MCF 10A (cell line): ENCODE measurements at regions of chr20 and their contacts with region 1.

Region 1: DNA sequence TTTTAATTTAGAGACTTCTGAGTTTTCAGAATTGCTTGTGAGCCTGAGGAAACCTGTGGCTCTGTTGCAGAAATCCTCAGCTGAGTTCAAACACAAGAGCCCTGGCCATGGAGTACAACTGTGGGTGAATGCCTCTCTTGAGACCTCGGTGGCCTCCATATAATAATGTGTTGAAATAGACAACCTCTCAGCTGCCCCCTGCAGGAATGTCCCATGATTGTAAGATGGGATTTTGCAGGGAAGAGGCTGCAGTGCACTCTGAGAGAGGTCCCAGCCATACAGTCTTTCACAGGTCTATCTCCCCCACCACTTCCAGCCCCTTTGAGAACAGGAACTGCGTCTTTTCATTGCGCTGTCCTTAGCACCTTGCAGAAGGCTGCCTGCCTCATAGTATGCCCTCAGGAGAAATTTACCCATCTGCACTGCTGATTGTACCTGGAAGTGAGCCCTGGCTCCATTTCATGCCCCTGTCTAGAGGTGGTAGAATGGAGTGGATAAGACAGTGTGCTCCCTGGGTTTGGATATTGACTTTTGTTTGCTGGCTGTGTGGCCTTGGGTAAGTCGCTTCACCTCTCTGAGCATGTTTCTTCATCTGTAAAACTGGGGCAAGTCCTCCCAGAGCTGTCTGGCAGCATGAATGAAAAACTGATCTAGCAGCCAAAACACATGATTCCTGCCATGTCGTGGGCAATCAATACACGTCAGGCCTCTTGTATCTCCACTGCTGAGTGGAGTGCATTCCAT is 16.8 kb upstream of the CDH22 start:
- DNase-seq: peak; percentile 52
- H3K4me3 Mint-ChIP-seq: no peak overlapping the region
- H3K27ac Mint-ChIP-seq: no peak overlapping the region
- H3K4me1 Mint-ChIP-seq: peaks cover 5% of the 10 kb centered on the region
- H3K27me3 Mint-ChIP-seq: peaks cover 45% of the 10 kb centered on the region
- CTCF ChIP-seq: peak; percentile 37

Region 2: DNA sequence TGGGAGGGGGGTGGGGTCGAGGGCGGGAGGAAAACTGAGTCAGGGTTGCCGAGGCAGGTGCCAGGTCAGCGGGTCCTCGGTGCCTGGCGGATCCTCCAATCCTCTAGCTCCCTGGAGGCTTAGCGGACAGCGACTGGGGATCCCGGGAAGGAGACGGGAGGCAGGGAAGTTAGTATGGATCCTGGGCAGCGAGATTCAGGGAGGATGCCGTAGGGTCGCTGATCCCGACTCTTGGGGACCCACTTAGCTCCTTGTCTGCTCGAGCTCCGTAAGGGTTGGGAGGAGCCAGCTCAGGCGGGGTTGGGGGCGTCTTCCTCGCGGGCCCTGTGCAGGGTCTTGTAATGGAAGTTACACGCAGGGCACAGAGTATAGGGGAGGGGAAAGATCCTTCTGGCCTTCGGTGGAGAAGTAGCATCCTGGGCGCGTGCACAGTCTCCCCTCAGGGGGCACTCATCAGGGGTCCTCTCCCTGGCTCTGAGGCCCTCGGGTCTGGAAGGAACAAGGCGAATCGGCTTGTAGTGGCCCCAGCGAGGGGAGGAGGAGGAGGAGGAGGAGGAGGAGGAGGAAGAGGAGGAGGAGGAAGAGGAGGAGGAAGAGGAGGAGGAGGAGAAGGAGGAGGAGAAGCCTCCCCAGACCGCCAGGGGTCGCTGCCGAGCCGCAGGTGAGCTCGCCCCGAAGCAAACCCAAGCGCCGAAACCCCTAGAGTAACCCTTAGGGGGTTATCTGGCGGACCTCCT is 302.6 kb before region 1 on chr20:
- CTCF ChIA-PET with region 1: no interaction called
- POLR2A ChIA-PET with region 1: no interaction called
- intact Hi-C with region 1: loop called (anchors 10 kb)
- DNase-seq: peak; percentile 59
- H3K4me3 Mint-ChIP-seq: peak overlapping the region; percentile 29
- H3K27ac Mint-ChIP-seq: no peak overlapping the region
- H3K4me1 Mint-ChIP-seq: peaks cover 12% of the 10 kb centered on the region
- H3K27me3 Mint-ChIP-seq: peaks cover 60% of the 10 kb centered on the region
- CTCF ChIP-seq: peak; percentile 84

Region 3: DNA sequence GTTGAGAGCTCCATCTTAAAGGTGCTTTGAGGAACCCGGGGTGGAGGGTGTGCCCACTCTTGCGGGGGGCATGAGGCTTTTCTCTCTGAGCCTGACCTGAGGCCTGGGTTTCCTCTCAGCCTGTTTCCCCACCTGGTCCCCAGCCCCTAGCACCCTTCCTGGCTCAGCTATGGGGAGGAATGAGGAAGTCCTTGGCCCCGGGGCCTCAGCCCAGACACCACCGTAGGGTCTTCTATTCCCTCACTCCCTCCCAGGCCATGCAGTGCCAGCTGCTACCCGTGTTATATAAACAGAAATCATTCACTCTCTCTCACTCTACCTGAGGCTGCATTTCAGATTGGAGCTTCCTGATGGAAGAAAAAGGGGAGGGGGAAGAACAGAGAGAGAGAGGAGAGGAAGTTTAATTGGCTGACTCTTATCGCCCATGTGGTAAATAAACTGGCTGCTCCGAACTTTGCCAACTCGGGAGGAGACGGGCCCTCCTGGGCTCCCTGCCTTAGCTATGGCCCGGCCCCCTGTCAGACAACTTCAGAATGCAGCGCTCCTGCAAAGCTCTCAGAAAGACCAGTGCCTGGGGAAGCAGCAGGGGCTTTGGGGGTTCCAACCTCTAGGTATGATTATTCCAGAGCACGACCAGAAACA is 19.7 kb before region 1 on chr20:
- CTCF ChIA-PET with region 1: interaction called, 10 read pairs
- POLR2A ChIA-PET with region 1: no interaction called
- intact Hi-C with region 1: no loop called
- DNase-seq: no peak
- H3K4me3 Mint-ChIP-seq: no peak overlapping the region
- H3K27ac Mint-ChIP-seq: no peak overlapping the region
- H3K4me1 Mint-ChIP-seq: no peaks in the 10 kb centered on the region
- H3K27me3 Mint-ChIP-seq: peaks cover 59% of the 10 kb centered on the region
- CTCF ChIP-seq: no peak

Region 4: GRCh38 chr20:46494077-46494476 is 168.9 kb after region 1 on chr20:
- CTCF ChIA-PET with region 1: no interaction called
- POLR2A ChIA-PET with region 1: no interaction called
- intact Hi-C with region 1: no loop called
- DNase-seq: no peak
- H3K4me3 Mint-ChIP-seq: no peak overlapping the region
- H3K27ac Mint-ChIP-seq: no peak overlapping the region
- H3K4me1 Mint-ChIP-seq: no peaks in the 10 kb centered on the region
- H3K27me3 Mint-ChIP-seq: peaks cover 81% of the 10 kb centered on the region
- CTCF ChIP-seq: no peak